Ascending aorta (tissue), 2 donors: ENCODE measurements at regions of chr6 and their contacts with region 1.

Region 1: DNA sequence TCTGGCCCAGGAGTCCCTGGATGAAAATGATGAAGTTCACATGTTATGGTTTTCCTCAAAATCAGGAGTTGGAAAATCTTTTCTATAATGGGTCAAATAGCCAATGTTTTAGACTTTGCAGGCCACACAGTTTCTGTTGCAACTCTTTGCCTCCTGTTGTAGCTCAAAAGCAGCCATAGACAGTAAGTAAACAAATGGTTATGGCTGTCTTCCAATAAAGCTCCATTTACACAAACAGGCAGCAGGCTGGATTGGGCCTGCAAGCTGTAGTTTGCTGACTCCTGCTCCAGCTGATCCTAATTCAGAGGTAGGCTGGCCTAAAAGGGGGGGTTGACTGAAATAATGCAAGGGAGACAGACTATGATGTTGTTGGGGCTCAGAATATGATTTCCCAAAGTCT is 33.0 kb downstream of the METTL24 start:
- DNase-seq: no peak
- H3K4me3 ChIP-seq: no peak overlapping the region
- H3K27ac ChIP-seq: peak overlapping the region; percentile 21 to 30
- H3K4me1 ChIP-seq: peaks cover 4 to 17% of the 10 kb centered on the region in 2 donors
- H3K27me3 ChIP-seq: no peaks in the 10 kb centered on the region
- CTCF ChIP-seq: no peak

Region 2: GRCh38 chr6:110366256-110366655 is 41.1 kb after region 1 on chr6:
- intact Hi-C with region 1: loop called (anchors 5 kb)
- DNase-seq: no peak
- H3K4me3 ChIP-seq: no peak overlapping the region
- H3K27ac ChIP-seq: no peak overlapping the region
- H3K4me1 ChIP-seq: peaks cover 6 to 13% of the 10 kb centered on the region in 2 donors
- H3K27me3 ChIP-seq: no peaks in the 10 kb centered on the region
- CTCF ChIP-seq: no peak